Activated naive CD4-positive, alpha-beta T cell treated with anti-CD3 and anti-CD28 coated beads for 36 hours (primary cell): ENCODE measurements at regions of chrX and their contacts with region 1.

Region 1: DNA sequence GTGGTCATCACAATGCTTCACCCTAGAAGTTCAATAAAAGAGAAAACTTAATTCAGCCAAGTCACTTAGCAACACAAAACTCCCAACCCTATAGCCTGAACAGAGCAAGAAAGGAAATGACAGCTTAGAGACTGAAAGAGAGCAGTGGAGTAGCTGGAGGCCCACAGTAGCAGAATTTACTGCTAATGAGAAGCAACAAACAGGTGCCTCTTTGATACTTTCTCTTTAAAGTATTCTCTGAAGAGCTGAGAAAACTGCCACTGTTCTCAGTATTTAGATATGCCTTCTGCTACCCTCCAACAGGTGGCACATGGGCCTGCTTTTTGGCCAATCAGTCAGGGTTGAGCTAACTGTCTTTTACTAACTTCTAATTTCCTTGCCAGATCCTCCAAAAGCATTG is 240.0 kb downstream of the GPC3 start:
- DNase-seq: peak; percentile 37
- H3K4me3 Mint-ChIP-seq: no peak overlapping the region
- H3K27ac Mint-ChIP-seq: no peak overlapping the region
- H3K4me1 Mint-ChIP-seq: peaks cover 54% of the 10 kb centered on the region
- H3K27me3 Mint-ChIP-seq: no peaks in the 10 kb centered on the region

Region 2: GRCh38 chrX:133620737-133621136 is 124.6 kb before region 1 on chrX:
- CTCF ChIA-PET with region 1: no interaction called
- intact Hi-C with region 1: no loop called
- DNase-seq: no peak
- H3K4me3 Mint-ChIP-seq: no peak overlapping the region
- H3K27ac Mint-ChIP-seq: no peak overlapping the region
- H3K4me1 Mint-ChIP-seq: no peaks in the 10 kb centered on the region
- H3K27me3 Mint-ChIP-seq: no peaks in the 10 kb centered on the region

Region 3: GRCh38 chrX:133698298-133698697 is 47.1 kb before region 1 on chrX:
- CTCF ChIA-PET with region 1: no interaction called
- intact Hi-C with region 1: loop called (anchors 1 kb)
- DNase-seq: no peak
- H3K4me3 Mint-ChIP-seq: no peak overlapping the region
- H3K27ac Mint-ChIP-seq: no peak overlapping the region
- H3K4me1 Mint-ChIP-seq: no peaks in the 10 kb centered on the region
- H3K27me3 Mint-ChIP-seq: no peaks in the 10 kb centered on the region

Region 4: DNA sequence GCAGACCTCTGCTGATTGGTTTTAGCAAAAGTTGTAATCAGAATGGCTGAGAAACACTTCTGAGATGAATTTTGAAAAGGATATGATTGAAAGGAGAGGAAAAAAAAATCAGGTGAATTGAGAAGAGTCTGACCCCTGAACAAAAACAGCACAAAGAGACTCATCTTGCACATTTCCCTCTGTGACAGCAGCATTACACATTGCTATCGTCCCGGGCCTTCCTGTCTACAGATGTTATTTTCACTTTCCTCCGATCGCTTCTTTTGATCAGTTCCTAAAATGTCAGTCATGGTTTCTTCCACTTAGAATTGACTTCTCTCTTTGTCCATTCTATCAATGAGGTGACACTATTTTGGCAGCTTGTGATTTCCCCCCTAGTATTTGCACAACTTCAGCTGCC is 22.6 kb before region 1 on chrX:
- CTCF ChIA-PET with region 1: no interaction called
- intact Hi-C with region 1: loop called (anchors 2 kb)
- DNase-seq: peak; percentile 33
- H3K4me3 Mint-ChIP-seq: peak overlapping the region; percentile 46
- H3K27ac Mint-ChIP-seq: no peak overlapping the region
- H3K4me1 Mint-ChIP-seq: peaks cover 10% of the 10 kb centered on the region
- H3K27me3 Mint-ChIP-seq: no peaks in the 10 kb centered on the region